Activated CD4-positive, alpha-beta T cell treated with anti-CD3 and anti-CD28 coated beads, Interleukin-2, amount 10 ng/mL, durations not matched to agents 24 days and 14 days (primary cell): ENCODE measurements at regions of chr11 and their contacts with region 1.

Region 1: DNA sequence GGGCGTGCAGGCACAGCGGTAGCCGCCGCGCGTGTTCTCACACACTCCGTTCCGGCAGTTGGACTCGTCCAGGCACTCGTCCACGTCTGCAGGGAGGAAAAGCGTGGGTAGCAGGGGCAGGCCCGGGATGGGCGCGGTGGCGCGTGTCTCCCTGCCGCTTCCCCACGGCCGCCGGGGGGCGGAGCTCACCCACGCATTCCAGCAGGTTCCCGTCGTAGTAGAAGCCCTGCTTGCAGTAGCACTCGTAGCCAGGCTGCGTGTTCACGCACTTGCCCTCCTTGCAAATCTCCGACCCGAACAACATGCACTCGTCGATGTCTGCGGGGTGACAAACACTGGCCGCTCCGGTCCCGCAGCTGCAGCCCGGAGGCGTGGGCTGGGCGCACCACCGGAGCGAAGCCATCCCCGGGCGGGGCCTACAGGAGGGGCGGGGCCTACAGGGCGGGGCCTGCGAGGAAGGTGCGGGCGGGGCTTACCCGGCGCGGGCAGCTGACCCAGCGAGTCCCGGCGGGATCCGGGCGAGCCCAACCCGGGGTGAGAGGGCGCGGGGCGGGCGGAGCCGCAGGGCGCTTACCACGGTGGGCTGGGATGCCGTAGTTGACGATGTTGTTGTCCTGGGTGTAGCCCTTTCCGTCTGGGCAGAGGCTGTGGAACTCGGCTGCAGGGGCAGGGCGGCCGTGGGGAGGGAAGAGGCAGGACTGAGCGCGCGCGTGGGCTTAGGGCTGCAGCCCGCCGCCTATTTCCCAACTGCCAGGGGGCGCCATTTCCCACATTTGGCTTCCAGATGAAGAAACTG is 15.6 kb downstream of the SCYL1 start:
- DNase-seq: peak; percentile 96
- H3K4me3 Mint-ChIP-seq: peak overlapping the region; percentile 85
- H3K27ac Mint-ChIP-seq: peak overlapping the region; percentile 85
- H3K4me1 Mint-ChIP-seq: peaks cover 17% of the 10 kb centered on the region
- H3K27me3 Mint-ChIP-seq: no peaks in the 10 kb centered on the region

Region 2: GRCh38 chr11:65524741-65525545 is 15.6 kb before region 1 on chr11 and contains the start of gene SCYL1:
- intact Hi-C with region 1: loop called (anchors 1 kb)
- DNase-seq: peak; percentile 91
- H3K4me3 Mint-ChIP-seq: peak within 1 kb of the TSS; percentile 91
- H3K27ac Mint-ChIP-seq: peak within 1 kb of the TSS; percentile 93
- H3K4me1 Mint-ChIP-seq: peaks cover 52% of the 10 kb centered on the region
- H3K27me3 Mint-ChIP-seq: no peaks in the 10 kb centered on the region
- total RNA-seq, gene SCYL1: 94.2 and 95.8 TPM in 2 replicates

Region 3: DNA sequence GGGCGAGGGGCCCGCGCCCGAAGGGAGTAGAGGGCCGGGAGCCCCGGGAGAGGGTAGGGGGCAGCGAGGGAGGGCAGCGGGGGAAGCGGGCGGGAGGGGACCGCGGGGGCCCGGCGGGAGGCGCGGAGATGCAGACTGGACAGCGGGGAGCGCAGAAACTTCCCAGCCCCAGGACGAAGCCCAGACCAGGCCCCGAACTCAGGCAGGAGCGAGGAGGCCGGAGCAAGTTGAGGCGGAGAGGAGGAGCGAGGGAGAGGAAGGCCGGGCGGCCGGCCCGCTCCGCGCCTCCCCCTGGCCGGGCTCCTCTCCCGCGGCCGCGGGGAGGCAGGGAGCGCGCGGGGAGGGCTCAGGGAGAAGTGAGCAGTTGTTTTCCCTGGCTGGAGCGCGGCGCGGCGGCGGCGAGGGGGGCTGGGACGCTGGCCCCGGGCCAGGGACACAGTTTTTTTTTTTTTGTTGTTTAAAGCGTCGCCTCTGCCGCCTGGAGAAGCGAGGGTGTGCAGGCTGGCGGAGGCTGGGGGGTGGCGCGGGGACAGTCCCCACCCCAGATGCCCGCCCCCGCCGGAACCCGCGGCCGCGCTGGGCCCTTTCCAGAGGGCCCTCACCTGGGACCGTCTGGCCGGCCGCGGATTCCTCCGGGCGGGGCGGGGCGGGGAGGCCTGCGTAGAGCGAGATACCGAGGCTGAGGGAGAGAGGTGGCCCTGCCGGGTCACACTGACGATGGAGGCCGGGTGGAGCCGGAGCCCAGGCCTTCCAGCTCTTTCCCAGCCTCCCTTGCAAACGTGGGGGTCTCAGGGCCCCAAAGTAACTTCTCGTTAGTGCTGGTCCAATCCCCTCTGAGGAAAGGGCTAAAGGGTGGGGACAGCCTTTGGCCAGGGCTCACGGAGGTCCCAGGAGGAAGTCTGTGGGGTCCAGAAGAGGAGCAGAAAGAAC is 17.8 kb after region 1 on chr11 and contains the start of gene LTBP3:
- intact Hi-C with region 1: loop called (anchors 1 kb)
- DNase-seq: peak; percentile 82
- H3K4me3 Mint-ChIP-seq: peak within 1 kb of the TSS; percentile 86
- H3K27ac Mint-ChIP-seq: peak within 1 kb of the TSS; percentile 88
- H3K4me1 Mint-ChIP-seq: peaks cover 49% of the 10 kb centered on the region
- H3K27me3 Mint-ChIP-seq: no peaks in the 10 kb centered on the region
- total RNA-seq, gene LTBP3: 94.9 and 96.9 TPM in 2 replicates

Region 4: GRCh38 chr11:65588199-65589054 is 47.9 kb after region 1 on chr11:
- intact Hi-C with region 1: loop called (anchors 1 kb)
- DNase-seq: peak; percentile 92
- H3K4me3 Mint-ChIP-seq: peak overlapping the region; percentile 81
- H3K27ac Mint-ChIP-seq: peak overlapping the region; percentile 93
- H3K4me1 Mint-ChIP-seq: peaks cover 36% of the 10 kb centered on the region
- H3K27me3 Mint-ChIP-seq: no peaks in the 10 kb centered on the region

Region 5: GRCh38 chr11:65637794-65638317 is 97.4 kb after region 1 on chr11 and contains the start of gene SIPA1:
- intact Hi-C with region 1: no loop called
- DNase-seq: peak; percentile 95
- H3K4me3 Mint-ChIP-seq: peak within 1 kb of the TSS; percentile 84
- H3K27ac Mint-ChIP-seq: peak within 1 kb of the TSS; percentile 89
- H3K4me1 Mint-ChIP-seq: peaks cover 31% of the 10 kb centered on the region
- H3K27me3 Mint-ChIP-seq: no peaks in the 10 kb centered on the region
- total RNA-seq, gene SIPA1: 118 and 125 TPM in 2 replicates